Caco-2 (cell line): ENCODE measurements at regions of chr2 and their contacts with region 1.

Region 1: DNA sequence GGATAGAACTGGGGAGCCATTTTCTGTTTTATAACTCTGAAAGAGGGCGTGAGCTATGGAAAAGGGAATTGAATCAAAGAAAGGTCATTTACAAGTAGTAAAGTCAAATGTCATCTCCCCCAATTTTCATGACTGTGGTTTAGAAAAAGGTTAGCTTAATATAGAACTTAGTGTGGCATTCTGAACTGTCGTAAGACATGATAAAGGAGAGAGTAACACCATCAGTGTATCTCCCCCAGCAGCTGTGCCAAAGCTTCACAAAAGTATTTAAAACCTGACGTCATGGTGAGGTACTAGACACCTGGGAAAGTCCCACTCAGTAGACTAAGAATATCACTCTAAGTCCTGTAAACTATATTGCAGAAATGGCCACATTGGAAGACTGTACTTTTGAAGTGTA is 5.8 kb upstream of the IKZF2 start:
- DNase-seq: no peak
- H3K4me3 ChIP-seq: no peak overlapping the region
- H3K4me3 Mint-ChIP-seq: no peak overlapping the region
- H3K27ac Mint-ChIP-seq: no peak overlapping the region
- H3K4me1 ChIP-seq: peaks cover 24% of the 10 kb centered on the region
- H3K4me1 Mint-ChIP-seq: peaks cover 4% of the 10 kb centered on the region
- H3K27me3 ChIP-seq: no peaks in the 10 kb centered on the region
- H3K27me3 Mint-ChIP-seq: no peaks in the 10 kb centered on the region
- CTCF ChIP-seq: no peak

Region 2: DNA sequence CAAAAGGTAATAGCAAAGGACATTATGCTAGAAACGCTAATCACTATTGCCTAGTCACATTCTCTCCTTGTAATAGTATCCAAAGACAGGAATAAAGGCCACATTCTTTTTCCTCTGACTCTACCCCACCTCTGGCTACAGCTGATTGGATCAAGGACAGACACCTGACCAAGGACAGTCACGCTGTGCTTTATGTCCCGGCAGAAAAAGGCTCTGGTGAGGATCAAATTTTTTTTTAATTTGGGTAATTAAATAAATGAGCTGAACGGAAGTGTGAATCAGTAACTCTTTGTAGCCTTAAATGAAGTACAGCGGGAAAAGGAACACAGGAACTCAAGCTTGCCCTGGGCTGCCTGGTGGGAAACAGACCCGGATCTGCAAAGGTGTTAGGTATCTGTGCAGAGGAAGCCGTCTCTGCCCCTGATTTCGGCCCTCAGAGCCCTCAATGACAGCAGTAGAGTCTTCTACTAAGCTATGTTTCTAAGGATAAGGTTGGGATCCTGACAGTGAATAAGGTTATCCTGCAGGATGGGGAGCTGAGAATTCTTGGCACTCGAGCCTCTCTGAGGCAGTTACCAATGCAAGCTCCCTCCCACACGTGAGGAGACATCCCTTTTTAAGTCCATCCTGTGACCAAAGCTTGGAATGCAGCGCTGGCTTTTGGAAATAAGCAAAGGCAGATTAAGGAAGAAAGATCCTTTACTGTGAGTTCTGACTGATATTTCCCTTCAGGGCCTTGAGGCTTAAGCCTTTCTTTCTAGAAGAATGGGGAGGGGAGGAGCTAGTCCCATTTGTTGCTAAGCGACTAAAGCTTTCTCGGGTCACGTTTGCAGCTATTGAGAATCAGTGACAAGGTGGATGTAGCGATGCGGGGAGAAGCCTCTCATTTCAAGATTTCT is 32.0 kb after region 1 on chr2:
- CTCF ChIA-PET with region 1: no interaction called
- POLR2A ChIA-PET with region 1: no interaction called
- intact Hi-C with region 1: loop called (anchors 1 kb)
- DNase-seq: peak; percentile 50 to 65
- H3K4me3 ChIP-seq: peak overlapping the region; percentile 15
- H3K4me3 Mint-ChIP-seq: peak overlapping the region; percentile 71
- H3K27ac Mint-ChIP-seq: peak overlapping the region; percentile 85
- H3K4me1 ChIP-seq: peaks cover 32% of the 10 kb centered on the region
- H3K4me1 Mint-ChIP-seq: peaks cover 28% of the 10 kb centered on the region
- H3K27me3 ChIP-seq: no peaks in the 10 kb centered on the region
- H3K27me3 Mint-ChIP-seq: no peaks in the 10 kb centered on the region
- CTCF ChIP-seq: no peak